PC-9 (cell line): ENCODE measurements at regions of chr17 and their contacts with region 1.

Region 1: DNA sequence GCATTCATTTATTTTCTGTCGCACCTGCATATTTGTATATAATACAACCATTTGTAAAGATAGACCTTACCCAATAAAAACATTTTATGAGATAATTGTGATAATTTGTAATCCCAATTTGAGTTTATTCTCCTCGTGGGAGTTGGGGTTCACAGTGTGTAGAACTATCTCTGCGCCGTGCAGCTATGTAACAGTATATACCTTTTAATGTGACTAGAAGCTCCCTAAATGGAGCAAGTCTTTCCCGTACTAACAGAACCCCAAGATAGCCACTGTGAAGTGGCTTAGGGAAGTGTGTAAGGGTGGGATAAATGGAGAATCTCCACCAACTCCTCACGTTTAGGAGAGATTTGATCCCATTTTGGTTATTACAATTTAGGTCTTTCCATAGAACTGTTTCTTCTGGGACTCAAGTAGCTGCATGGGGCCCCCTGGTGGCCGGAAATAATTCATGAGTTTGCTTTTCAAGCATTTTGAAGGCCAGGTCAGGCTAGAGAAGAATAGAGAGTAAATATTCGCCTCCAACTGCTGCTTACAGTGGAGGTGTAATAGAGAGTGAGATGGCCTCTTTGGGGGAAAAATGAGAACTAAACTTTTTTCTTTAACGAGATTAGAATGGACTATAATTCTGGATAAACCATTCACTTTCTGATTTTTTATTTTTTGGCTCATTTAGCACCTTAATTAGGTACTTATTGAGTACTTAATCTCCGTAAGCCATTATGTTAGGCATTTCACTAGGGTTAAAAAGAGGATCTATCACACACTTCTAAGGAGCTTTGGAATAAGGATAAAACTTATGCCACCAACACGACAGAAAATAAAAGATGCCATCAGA is 4.5 kb downstream of the TMEM100 start:
- DNase-seq: peak; percentile 46 to 50
- H3K4me3 ChIP-seq: no peak overlapping the region
- H3K27ac ChIP-seq: no peak overlapping the region
- H3K4me1 ChIP-seq: no peaks in the 10 kb centered on the region
- H3K27me3 ChIP-seq: peaks cover 52% of the 10 kb centered on the region
- CTCF ChIP-seq: peak; percentile 93

Region 2: GRCh38 chr17:55811536-55811935 is 93.4 kb after region 1 on chr17:
- CTCF ChIA-PET with region 1: no interaction called
- POLR2A ChIA-PET with region 1: interaction called, 20 read pairs
- intact Hi-C with region 1: no loop called
- DNase-seq: no peak
- H3K4me3 ChIP-seq: no peak overlapping the region
- H3K27ac ChIP-seq: no peak overlapping the region
- H3K4me1 ChIP-seq: no peaks in the 10 kb centered on the region
- H3K27me3 ChIP-seq: peaks cover 51% of the 10 kb centered on the region
- CTCF ChIP-seq: no peak